Activated naive CD4-positive, alpha-beta T cell treated with anti-CD3 and anti-CD28 coated beads for 36 hours (primary cell): ENCODE measurements at regions of chr3 and their contacts with region 1.

Region 1: DNA sequence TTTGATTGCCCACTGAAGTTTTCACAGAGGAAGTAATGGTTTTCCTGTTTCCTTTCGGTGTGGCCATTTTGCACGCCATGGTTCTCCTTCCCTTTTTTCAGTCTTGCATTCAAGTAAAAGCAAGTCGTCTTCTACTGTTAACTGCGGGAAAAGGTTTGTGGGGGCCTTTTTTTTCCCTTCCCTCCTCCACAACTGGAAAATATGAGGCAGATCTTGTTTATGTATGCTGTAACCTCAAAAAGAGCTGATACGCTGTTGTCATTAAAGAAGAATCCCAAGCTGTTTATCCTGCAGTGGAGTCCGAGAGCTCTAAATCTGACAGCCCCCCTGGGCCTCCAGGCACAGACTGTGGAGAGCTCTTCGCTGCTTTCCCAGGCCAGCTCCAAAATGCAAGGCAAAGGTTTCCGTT is 40.4 kb downstream of the FILIP1L start:
- DNase-seq: peak; percentile 17
- H3K4me3 Mint-ChIP-seq: peak overlapping the region; percentile 34
- H3K27ac Mint-ChIP-seq: peak overlapping the region; percentile 47
- H3K4me1 Mint-ChIP-seq: peaks cover 46% of the 10 kb centered on the region
- H3K27me3 Mint-ChIP-seq: no peaks in the 10 kb centered on the region

Region 2: GRCh38 chr3:99365979-99366378 is 707.9 kb before region 1 on chr3:
- CTCF ChIA-PET with region 1: no interaction called
- intact Hi-C with region 1: no loop called
- DNase-seq: no peak
- H3K4me3 Mint-ChIP-seq: no peak overlapping the region
- H3K27ac Mint-ChIP-seq: no peak overlapping the region
- H3K4me1 Mint-ChIP-seq: no peaks in the 10 kb centered on the region
- H3K27me3 Mint-ChIP-seq: no peaks in the 10 kb centered on the region

Region 3: DNA sequence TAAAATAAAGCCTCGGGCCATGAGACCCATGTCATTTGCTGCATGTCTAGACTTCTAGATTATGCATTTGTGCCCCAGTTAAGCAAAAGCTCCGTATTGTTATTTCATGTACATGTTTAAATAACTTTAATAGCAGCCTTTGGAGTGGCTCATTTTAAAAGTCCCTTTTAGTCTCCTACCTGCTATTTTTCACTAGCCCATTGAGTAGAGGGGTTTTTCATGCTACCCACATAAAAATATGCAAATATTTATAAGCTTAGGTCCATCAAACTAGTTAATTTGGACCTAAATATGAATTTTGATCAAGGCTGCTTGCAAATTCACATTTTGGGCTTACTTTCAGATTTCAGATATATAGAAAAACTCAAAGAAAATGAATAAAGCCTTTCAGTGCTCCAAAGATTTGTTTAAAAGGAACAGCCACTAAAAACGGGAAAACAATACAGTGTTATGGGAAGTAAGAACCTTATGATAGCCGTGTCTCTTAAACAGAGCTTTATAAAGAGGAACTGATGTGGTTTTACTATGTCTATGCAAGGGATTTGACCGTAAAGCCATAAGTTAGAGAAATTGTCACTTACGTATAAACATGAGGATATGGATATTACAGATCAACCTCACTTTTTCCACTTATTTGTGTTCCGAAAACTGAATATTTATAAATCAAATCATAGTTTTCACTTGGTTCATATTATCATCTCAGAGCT is 10.3 kb after region 1 on chr3:
- CTCF ChIA-PET with region 1: interaction called, 13 read pairs
- intact Hi-C with region 1: loop called (anchors 1 kb)
- DNase-seq: no peak
- H3K4me3 Mint-ChIP-seq: no peak overlapping the region
- H3K27ac Mint-ChIP-seq: no peak overlapping the region
- H3K4me1 Mint-ChIP-seq: peaks cover 7% of the 10 kb centered on the region
- H3K27me3 Mint-ChIP-seq: no peaks in the 10 kb centered on the region

Region 4: DNA sequence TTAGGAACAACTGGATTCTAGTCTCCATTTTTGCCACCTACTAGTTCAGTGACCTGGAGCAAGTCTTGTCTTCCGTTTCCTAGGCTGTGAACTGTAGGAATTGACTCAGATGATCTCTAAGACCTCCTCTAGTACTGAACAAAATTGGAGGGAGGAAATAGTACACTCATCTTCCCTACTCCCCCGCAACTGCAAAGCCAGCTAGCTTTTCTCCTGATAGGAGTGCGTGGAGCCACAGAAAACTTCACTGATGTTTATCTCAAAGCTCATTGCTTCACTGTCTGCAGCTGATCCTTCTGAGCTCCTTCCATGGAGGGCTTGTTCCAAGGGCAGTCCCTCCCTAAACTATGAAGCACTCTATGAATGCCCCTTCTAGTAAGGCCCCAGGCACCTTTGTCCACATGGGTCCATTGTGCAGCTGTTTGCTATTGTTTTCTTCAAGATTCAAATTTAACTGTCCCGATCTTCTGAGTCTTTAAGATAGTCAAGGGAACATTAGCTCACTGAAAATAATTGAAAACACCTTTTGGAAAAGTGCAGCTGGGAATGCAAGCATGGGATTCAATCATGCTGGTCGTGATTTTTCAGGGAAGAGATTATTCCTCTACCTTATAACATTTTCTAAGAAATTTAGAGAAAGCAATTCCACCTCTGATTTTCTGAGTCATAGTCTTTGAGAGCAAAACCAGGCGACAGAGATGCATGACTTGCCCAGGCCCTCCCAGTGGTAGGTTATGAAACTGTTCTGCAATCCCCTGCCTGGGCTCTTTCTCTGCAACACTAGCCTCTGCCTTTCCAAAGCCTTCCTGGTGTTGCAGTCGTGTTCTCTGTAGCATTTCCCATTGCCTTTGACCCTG is 16.1 kb after region 1 on chr3:
- CTCF ChIA-PET with region 1: interaction called, 13 read pairs
- intact Hi-C with region 1: loop called (anchors 1 kb)
- DNase-seq: peak; percentile 19
- H3K4me3 Mint-ChIP-seq: no peak overlapping the region
- H3K27ac Mint-ChIP-seq: no peak overlapping the region
- H3K4me1 Mint-ChIP-seq: peaks cover 8% of the 10 kb centered on the region
- H3K27me3 Mint-ChIP-seq: no peaks in the 10 kb centered on the region

Region 5: DNA sequence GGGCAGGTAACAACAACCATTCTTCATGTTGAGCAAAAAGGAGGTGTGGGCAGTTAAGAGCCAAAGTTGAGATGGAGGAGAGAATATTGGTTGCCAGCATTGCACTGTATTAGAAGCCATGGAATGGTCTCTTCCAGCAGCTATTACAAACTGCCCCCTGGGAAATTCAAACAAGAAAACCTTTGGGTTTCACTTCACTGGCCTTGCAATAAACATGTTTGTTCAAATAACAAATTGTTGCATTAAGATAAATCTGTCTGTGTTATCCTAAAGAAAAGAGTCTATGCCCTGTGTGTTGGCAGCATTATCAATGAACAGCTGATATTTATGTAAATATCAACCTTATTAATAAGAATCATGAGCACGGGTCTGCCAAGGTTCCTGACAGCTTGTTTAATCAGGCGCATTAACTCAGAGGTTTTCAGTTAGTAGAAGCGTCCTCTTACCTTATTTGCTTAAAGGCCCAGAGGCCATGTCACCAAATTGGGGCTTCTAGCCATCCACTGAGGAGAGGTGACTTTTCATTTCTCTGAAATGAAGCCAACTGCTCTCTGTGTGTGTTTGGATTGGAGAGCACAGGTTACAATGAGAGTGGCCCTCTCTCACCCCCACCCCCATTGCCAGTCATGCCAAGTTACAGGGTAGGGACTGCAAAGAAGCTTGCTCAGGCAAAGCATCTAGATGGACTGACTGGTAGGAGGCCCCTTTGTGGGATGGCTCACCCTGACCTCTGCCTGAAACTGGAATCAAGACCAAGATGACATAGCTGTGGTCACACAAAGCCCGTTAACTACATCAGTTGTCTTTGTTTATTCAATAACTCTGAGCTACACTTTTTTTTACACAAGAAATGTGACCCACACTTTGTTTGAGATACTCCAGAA is 29.9 kb after region 1 on chr3:
- CTCF ChIA-PET with region 1: interaction called, 14 read pairs
- intact Hi-C with region 1: loop called (anchors 2 kb)
- DNase-seq: no peak
- H3K4me3 Mint-ChIP-seq: no peak overlapping the region
- H3K27ac Mint-ChIP-seq: no peak overlapping the region
- H3K4me1 Mint-ChIP-seq: peaks cover 24% of the 10 kb centered on the region
- H3K27me3 Mint-ChIP-seq: no peaks in the 10 kb centered on the region

Region 6: DNA sequence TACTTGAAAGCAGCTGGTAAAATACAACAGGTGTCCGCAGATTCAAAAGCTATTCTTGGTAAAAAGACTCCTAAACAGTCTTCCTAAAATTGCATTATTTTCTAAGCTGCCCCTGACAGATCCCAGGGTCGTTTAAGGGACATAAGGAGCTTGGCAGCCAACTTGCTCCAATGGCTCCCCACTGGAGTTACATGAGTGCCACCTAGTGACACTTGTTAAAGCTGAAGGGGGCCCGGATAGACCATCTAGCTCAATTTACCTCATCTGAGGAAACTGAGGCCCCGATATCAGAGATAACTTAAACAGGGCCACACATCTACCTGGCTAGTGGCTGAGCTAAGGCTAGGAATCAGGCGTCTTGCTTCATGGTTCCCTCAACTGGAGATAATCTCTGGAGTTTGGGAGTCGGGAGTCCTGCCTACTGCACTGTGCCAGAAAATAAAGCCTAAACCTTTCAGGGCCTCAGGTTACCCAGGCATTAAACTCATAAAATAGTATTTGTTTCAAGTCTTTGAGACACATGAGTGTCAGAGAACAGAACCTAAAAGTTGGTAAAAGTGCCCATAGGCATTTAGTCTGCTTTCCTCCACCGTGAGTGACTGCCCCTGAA is 180.4 kb after region 1 on chr3:
- CTCF ChIA-PET with region 1: interaction called, 46 read pairs
- intact Hi-C with region 1: no loop called
- DNase-seq: peak; percentile 65
- H3K4me3 Mint-ChIP-seq: no peak overlapping the region
- H3K27ac Mint-ChIP-seq: no peak overlapping the region
- H3K4me1 Mint-ChIP-seq: peaks cover 13% of the 10 kb centered on the region
- H3K27me3 Mint-ChIP-seq: no peaks in the 10 kb centered on the region

Region 7: GRCh38 chr3:100334488-100335351 is 260.8 kb after region 1 on chr3 and contains the start of gene NIT2:
- CTCF ChIA-PET with region 1: no interaction called
- intact Hi-C with region 1: loop called (anchors 2 kb)
- DNase-seq: peak; percentile 82
- H3K4me3 Mint-ChIP-seq: peak within 1 kb of the TSS; percentile 86
- H3K27ac Mint-ChIP-seq: peak within 1 kb of the TSS; percentile 86
- H3K4me1 Mint-ChIP-seq: peaks cover 26% of the 10 kb centered on the region
- H3K27me3 Mint-ChIP-seq: no peaks in the 10 kb centered on the region
- total RNA-seq, gene NIT2: 69.1 to 76.0 TPM